Activated CD4-positive, alpha-beta memory T cell treated with anti-CD3 and anti-CD28 coated beads for 36 hours (primary cell): ENCODE measurements at regions of chr1 and their contacts with region 1.

Region 1: GRCh38 chr1:107056426-107057196 is at the start of gene PRMT6:
- DNase-seq: peak; percentile 86
- H3K4me3 Mint-ChIP-seq: peak within 1 kb of the TSS; percentile 94
- H3K27ac Mint-ChIP-seq: peak within 1 kb of the TSS; percentile 90
- H3K4me1 Mint-ChIP-seq: peaks cover 22% of the 10 kb centered on the region
- H3K27me3 Mint-ChIP-seq: no peaks in the 10 kb centered on the region
- total RNA-seq, gene PRMT6: 9.5 to 9.7 TPM

Region 2: GRCh38 chr1:106817575-106817974 is 239.0 kb before region 1 on chr1:
- CTCF ChIA-PET with region 1: no interaction called
- POLR2A ChIA-PET with region 1: no interaction called
- intact Hi-C with region 1: no loop called
- DNase-seq: no peak
- H3K4me3 Mint-ChIP-seq: no peak overlapping the region
- H3K27ac Mint-ChIP-seq: no peak overlapping the region
- H3K4me1 Mint-ChIP-seq: no peaks in the 10 kb centered on the region
- H3K27me3 Mint-ChIP-seq: no peaks in the 10 kb centered on the region

Region 3: DNA sequence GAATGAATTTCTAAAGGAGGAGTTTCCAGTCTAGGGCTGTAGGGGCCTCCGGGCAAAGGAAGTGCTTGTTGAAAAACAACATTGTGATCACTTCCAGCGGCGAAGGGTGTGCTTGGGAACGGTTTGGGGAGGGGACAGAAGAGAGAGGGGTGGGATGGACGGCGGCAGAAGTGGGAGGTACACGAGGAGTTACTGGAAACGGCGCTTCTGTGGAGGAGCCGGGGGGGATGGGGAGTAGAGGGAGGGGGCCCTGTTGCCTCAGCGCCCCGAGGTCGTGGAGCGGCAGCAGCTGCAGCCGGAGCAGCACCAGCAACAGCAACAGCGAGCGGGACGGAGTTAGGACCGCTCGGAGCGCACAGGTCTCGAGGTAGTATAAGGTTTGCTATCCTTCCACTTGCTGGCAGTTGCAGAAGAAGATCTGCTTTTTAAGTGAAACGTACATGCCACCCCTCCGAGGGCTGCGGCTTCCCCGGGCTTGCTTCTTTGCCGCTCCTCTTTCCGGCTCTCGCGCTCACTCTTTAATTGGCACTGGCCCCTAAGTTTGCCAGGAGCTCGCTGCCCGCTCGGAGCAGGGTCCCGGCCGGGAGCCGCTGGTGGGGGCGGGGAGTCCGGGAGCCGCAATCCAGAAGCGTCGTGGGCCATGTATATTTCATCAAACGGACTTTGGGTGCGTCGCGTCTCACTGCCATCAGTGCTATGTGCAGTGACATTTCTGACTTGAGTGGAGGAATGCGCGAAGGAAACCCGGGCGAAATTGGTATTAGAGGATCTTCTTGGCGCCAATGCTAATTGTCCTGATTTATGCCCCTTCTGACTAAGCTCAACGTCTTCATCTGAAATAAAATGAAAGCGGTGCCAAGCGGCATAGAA is 83.5 kb after region 1 on chr1:
- CTCF ChIA-PET with region 1: no interaction called
- POLR2A ChIA-PET with region 1: interaction called, 3 read pairs
- intact Hi-C with region 1: loop called (anchors 2 kb)
- DNase-seq: peak; percentile 28
- H3K4me3 Mint-ChIP-seq: peak overlapping the region; percentile 61
- H3K27ac Mint-ChIP-seq: no peak overlapping the region
- H3K4me1 Mint-ChIP-seq: peaks cover 13% of the 10 kb centered on the region
- H3K27me3 Mint-ChIP-seq: peaks cover 38% of the 10 kb centered on the region